MCF 10A (cell line): ENCODE measurements at regions of chr1 and their contacts with region 1.

Region 1: GRCh38 chr1:32773018-32773763 is 44.0 kb downstream of the YARS1 start:
- DNase-seq: peak; percentile 86
- H3K4me3 Mint-ChIP-seq: no peak overlapping the region
- H3K27ac Mint-ChIP-seq: peak overlapping the region; percentile 64
- H3K4me1 Mint-ChIP-seq: peaks cover 28% of the 10 kb centered on the region
- H3K27me3 Mint-ChIP-seq: no peaks in the 10 kb centered on the region
- CTCF ChIP-seq: peak; percentile 95

Region 2: DNA sequence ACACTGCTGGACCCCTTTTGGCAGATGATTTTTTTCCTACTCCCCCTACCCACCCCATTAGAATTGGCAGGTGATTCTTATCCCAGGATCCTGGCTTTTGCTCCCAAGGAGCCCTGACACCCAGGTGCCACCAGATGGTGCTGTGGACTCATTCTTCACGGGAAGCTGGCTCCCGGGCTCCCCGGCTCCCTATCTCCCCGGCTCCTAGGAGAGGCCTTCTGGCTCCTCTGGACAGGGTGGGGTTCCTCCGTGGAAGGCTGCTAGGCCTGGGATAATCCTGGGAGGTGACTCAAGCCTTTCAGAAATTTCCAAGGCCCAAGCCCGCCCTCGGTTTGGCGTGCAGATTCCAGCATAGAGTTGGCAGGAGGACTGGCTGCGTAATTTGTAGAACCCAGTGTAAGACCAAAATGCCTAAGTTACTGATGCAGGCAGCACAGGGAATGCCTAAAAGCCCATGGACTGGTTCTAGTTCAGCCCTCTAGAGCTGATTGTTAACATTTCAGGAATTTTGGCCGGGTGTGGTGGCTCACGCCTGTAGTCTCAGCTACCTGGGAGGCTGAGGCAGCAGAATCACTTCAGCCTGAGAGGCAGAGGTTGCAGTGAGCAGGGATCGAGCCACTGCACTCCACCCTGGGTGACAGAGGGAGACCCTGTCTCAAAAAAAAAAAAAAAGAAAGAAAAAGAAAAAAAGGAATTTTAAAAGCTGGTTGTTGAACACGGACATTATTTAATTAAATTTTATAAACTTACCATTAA is 372.1 kb before region 1 on chr1:
- CTCF ChIA-PET with region 1: interaction called, 9 read pairs
- POLR2A ChIA-PET with region 1: no interaction called
- intact Hi-C with region 1: loop called (anchors 1 kb)
- DNase-seq: peak; percentile 90
- H3K4me3 Mint-ChIP-seq: no peak overlapping the region
- H3K27ac Mint-ChIP-seq: peak overlapping the region; percentile 67
- H3K4me1 Mint-ChIP-seq: peaks cover 6% of the 10 kb centered on the region
- H3K27me3 Mint-ChIP-seq: no peaks in the 10 kb centered on the region
- CTCF ChIP-seq: peak; percentile 86

Region 3: DNA sequence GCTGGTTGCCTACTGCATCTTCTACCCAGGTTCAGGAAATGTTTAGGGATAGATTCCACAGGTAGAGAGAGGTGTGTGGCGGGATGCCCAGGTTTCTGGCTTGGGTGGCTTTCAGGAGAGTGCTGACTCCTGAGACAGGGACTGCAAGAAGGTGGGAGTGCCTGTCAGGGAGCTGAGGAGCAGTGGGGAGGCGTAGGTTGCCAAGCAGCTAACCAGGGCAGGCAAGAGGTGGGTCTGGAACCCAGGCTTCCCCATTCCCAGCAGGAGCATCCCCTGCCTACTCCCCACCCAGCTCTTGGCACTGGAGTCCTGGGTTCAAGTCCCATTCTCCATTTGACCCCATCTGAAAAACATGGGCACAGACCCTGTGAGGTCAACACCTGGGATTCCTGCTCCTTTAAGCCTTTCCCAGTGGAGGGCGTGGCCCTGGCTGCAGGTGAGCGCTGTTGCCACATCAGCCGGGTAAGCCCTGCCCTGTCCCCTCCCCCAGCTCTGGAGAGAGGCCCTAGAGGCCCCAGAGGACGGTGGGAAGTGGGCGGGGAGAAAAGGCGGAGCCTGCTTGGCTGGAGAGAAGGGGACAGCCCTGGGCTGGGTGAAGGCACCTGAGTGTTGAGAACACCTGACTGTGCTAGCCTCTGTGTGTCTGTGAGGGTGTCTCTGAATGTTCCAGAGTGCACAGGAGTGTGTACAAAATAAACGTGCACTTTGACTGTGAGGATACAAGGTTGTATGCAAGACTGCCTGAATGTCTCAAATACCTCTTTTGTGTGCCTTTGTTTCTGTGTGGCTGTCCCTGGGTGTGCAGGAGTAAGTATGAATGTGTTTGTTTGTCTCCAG is 56.7 kb before region 1 on chr1:
- CTCF ChIA-PET with region 1: interaction called, 418 read pairs
- POLR2A ChIA-PET with region 1: interaction called, 61 read pairs
- intact Hi-C with region 1: loop called (anchors 1 kb)
- DNase-seq: peak; percentile 96
- H3K4me3 Mint-ChIP-seq: peak overlapping the region; percentile 38
- H3K27ac Mint-ChIP-seq: peak overlapping the region; percentile 70
- H3K4me1 Mint-ChIP-seq: peaks cover 19% of the 10 kb centered on the region
- H3K27me3 Mint-ChIP-seq: no peaks in the 10 kb centered on the region
- CTCF ChIP-seq: no peak

Region 4: DNA sequence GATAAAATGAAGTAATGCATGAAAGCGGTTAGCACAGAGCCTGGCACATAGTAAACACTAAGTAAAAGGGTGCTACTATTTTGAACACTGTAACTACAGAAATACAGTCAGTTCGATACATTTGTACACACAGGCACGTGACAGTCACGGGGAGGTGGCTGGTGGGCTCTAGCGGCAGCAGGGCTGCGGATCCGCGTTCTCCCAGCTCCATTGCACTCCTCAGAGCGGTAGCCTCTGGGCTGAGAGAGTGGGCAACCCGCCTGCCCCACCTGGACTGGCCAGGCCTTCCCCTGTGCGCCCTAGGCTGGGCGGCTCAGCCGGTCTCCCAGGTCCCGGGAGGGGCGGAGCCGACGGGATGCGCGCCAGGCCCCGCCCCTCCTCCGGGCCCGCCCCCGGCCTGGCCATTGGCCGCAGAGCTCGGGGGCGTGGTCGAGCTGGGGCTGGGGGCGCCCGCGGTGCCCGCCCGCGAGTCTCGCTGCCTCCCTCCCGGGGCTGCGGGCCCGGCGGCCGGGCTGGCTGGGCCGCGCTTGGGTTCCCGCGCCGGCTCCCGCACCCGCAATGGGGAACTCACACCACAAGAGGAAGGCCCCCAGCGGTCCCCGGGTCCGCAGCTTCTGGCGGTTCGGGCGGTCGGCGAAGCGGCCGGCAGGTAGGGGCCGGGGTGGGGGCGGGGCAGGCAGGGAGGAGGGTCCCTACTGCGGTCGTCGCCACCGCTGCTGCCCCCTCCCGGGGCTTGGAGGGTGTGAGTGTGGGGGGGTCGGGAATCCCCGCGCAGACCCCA is 19.5 kb before region 1 on chr1:
- CTCF ChIA-PET with region 1: interaction called, 6 read pairs
- POLR2A ChIA-PET with region 1: interaction called, 36 read pairs
- intact Hi-C with region 1: no loop called
- DNase-seq: peak; percentile 74
- H3K4me3 Mint-ChIP-seq: peak overlapping the region; percentile 96
- H3K27ac Mint-ChIP-seq: no peak overlapping the region
- H3K4me1 Mint-ChIP-seq: peaks cover 16% of the 10 kb centered on the region
- H3K27me3 Mint-ChIP-seq: no peaks in the 10 kb centered on the region
- CTCF ChIP-seq: no peak

Region 5: GRCh38 chr1:32786856-32787255 is 13.7 kb after region 1 on chr1:
- CTCF ChIA-PET with region 1: interaction called, 22 read pairs
- POLR2A ChIA-PET with region 1: interaction called, 8 read pairs
- intact Hi-C with region 1: no loop called
- DNase-seq: no peak
- H3K4me3 Mint-ChIP-seq: no peak overlapping the region
- H3K27ac Mint-ChIP-seq: no peak overlapping the region
- H3K4me1 Mint-ChIP-seq: peaks cover 2% of the 10 kb centered on the region
- H3K27me3 Mint-ChIP-seq: no peaks in the 10 kb centered on the region
- CTCF ChIP-seq: no peak

Region 6: GRCh38 chr1:32858791-32859190 is 85.6 kb after region 1 on chr1:
- CTCF ChIA-PET with region 1: no interaction called
- POLR2A ChIA-PET with region 1: no interaction called
- intact Hi-C with region 1: no loop called
- DNase-seq: no peak
- H3K4me3 Mint-ChIP-seq: no peak overlapping the region
- H3K27ac Mint-ChIP-seq: no peak overlapping the region
- H3K4me1 Mint-ChIP-seq: no peaks in the 10 kb centered on the region
- H3K27me3 Mint-ChIP-seq: no peaks in the 10 kb centered on the region
- CTCF ChIP-seq: no peak

Region 7: GRCh38 chr1:32870615-32871363 is 97.6 kb after region 1 on chr1 and contains the start of gene FNDC5:
- CTCF ChIA-PET with region 1: interaction called, 3 read pairs
- POLR2A ChIA-PET with region 1: no interaction called
- intact Hi-C with region 1: loop called (anchors 5 kb)
- DNase-seq: no peak
- H3K4me3 Mint-ChIP-seq: peak within 1 kb of the TSS; percentile 61
- H3K27ac Mint-ChIP-seq: no peak within 1 kb of the TSS
- H3K4me1 Mint-ChIP-seq: peaks cover 5% of the 10 kb centered on the region
- H3K27me3 Mint-ChIP-seq: peaks cover 12% of the 10 kb centered on the region
- CTCF ChIP-seq: no peak
- total RNA-seq, gene FNDC5: not detected in 2 replicates